ENCODE measurements at regions of chr10 and their contacts with region 1.

Region 1: GRCh38 chr10:124388823-124389612 is 29.7 kb downstream of the OAT start:
- DNase-seq: no peak
- H3K4me3 ChIP-seq: peak overlapping the region; percentile 50
- CTCF ChIP-seq: peak; percentile 97

Region 2: GRCh38 chr10:123986742-123987141 is 402.3 kb before region 1 on chr10:
- CTCF ChIA-PET with region 1: interaction called, 573 read pairs
- POLR2A ChIA-PET with region 1: no interaction called
- DNase-seq: no peak
- H3K4me3 ChIP-seq: no peak overlapping the region
- CTCF ChIP-seq: no peak

Region 3: DNA sequence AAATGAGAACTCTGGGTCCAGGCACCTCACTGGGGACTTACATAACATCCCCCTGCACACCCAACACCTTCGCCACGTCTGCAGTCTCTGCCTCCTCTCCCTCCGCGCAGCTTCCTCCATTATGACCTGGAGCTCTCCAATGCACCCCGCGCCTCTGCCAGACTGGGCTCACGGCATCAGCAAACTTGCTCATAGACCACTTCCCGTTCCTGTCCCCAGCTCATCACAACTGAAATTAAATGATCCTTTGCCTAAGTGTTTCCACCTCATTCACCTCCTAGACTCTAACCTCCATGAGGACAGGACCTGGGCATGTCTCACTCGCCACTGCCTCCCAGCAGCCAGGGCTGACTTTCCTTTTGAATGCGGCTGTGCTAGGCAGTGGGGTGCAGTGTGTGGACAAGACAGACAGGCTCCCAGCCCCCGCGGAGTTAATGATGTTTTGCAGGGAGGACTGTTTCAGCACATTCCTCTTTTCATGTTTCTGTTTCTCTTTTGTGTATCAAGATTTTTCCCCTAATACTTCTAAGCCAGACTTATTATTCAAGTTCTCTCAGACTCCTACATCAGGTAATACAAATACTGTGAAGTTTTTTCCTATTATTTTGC is 314.4 kb before region 1 on chr10:
- CTCF ChIA-PET with region 1: interaction called, 12 read pairs
- POLR2A ChIA-PET with region 1: no interaction called
- DNase-seq: no peak
- H3K4me3 ChIP-seq: no peak overlapping the region
- CTCF ChIP-seq: no peak

Region 4: GRCh38 chr10:124319926-124320401 is 69.1 kb before region 1 on chr10:
- CTCF ChIA-PET with region 1: no interaction called
- POLR2A ChIA-PET with region 1: no interaction called
- DNase-seq: no peak
- H3K4me3 ChIP-seq: no peak overlapping the region
- CTCF ChIP-seq: no peak

Region 5: GRCh38 chr10:124364633-124365032 is 24.4 kb before region 1 on chr10:
- CTCF ChIA-PET with region 1: interaction called, 30 read pairs
- POLR2A ChIA-PET with region 1: no interaction called
- DNase-seq: no peak
- H3K4me3 ChIP-seq: no peak overlapping the region
- CTCF ChIP-seq: no peak

Region 6: GRCh38 chr10:124403548-124403947 is 14.5 kb after region 1 on chr10:
- CTCF ChIA-PET with region 1: interaction called, 66 read pairs
- POLR2A ChIA-PET with region 1: interaction called, 3 read pairs
- DNase-seq: peak; percentile 36
- H3K4me3 ChIP-seq: no peak overlapping the region
- CTCF ChIP-seq: peak; percentile 50

Measured in AG04449 (cell line).